IMR-90 (cell line): ENCODE measurements at regions of chr7 and their contacts with region 1.

Region 1: DNA sequence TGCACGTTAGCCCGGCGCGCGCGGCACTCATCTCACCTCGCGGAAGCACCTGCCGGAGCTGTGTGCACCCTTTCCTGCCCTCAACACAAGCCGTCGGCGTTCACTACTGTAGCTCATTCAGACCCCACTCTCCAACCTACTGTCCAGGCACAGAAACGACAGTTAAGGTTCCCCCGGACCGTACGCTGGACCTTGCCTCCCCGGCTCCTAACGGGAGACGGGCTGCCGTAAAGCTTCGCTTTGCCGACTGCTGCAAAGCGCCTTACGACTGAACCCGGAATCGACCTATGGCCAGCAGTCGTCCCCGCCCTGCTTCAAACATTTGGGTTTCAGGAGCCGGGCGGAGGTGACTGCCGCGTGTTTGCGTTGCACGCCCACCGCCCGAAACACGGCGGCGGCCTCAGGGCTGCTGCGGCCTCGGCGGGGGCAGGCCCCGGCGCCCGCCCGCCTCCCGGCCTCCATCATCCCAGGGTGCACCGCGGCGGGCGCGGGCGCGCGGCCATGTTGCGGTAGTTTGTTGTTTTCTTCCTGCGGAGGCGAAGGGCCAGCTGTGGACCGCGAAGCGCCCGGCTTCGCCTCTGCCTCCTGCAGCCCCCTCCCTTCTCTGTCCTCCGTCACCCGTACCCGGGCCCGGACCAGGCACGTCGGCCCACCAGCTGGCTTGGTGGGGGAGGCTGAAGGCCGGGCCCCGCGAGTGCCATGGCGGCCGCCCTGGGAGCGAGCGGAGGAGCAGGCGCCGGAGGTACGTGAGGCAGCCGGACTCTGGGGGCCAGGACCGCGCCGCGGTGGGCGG is at the start of gene RBM33:
- DNase-seq: peak; percentile 83
- ATAC-seq: peak; percentile 92
- H3K4me3 ChIP-seq: peak within 1 kb of the TSS; percentile 88
- H3K27ac ChIP-seq: peak within 1 kb of the TSS; percentile 90
- H3K4me1 ChIP-seq: peaks cover 3% of the 10 kb centered on the region
- H3K27me3 ChIP-seq: no peaks in the 10 kb centered on the region
- CTCF ChIP-seq: no peak
- POLR2A ChIP-seq: peak; percentile 83
- RAD21 ChIP-seq: no peak
- total RNA-seq, gene RBM33: 7.3 and 10.6 TPM in 2 replicates

Region 2: DNA sequence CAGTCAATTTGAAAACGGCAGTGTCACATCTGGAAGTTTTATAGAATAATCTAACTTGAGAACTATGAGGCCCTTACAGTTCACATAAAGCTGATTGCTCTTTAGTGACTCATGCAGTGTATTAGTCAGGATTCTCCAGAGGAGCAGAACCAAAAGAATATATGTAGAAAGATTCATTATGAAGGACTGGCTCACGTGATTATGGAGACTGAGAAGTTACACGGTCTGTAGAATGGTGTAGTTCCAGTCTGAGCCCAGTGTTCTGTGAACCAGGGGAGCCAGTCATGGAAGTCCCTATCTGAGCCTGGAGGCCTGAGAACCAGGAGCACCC is 21.5 kb after region 1 on chr7:
- CTCF ChIA-PET with region 1: no interaction called
- POLR2A ChIA-PET with region 1: no interaction called
- dilution Hi-C with region 1: no loop called
- in situ Hi-C with region 1: no loop called
- intact Hi-C with region 1: no loop called
- DNase-seq: peak; percentile 93
- ATAC-seq: peak; percentile 91
- H3K4me3 ChIP-seq: no peak overlapping the region
- H3K27ac ChIP-seq: peak overlapping the region; percentile 65; the same call in 1 of the 2 replicates
- H3K4me1 ChIP-seq: peaks cover 12% of the 10 kb centered on the region
- H3K27me3 ChIP-seq: no peaks in the 10 kb centered on the region
- CTCF ChIP-seq: no peak
- POLR2A ChIP-seq: no peak
- RAD21 ChIP-seq: no peak

Region 3: DNA sequence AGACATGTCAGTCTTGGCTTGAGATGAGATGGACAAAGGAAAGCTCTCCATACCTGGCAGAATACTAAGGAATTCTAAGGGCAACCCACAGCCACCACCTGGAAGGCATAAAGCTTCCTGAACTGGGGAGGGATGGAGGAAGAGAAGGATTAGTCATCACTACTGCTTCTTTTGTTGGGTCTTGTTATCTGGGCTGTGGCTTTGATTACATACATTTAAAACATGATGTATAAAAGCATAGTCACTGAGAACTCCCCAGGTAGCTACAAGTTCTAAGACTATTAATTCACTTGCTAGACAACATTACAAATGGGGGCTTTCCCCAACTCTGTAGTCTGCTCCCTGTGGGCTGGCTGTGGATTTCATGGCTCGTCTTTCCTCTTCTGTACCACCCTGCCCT is 58.2 kb after region 1 on chr7:
- CTCF ChIA-PET with region 1: no interaction called
- POLR2A ChIA-PET with region 1: no interaction called
- dilution Hi-C with region 1: no loop called
- in situ Hi-C with region 1: no loop called
- intact Hi-C with region 1: loop called (anchors 2 kb)
- DNase-seq: peak; percentile 39
- ATAC-seq: peak; percentile 40
- H3K4me3 ChIP-seq: no peak overlapping the region
- H3K27ac ChIP-seq: no peak overlapping the region
- H3K4me1 ChIP-seq: peaks cover 4% of the 10 kb centered on the region
- H3K27me3 ChIP-seq: no peaks in the 10 kb centered on the region
- CTCF ChIP-seq: no peak
- POLR2A ChIP-seq: no peak
- RAD21 ChIP-seq: no peak

Region 4: DNA sequence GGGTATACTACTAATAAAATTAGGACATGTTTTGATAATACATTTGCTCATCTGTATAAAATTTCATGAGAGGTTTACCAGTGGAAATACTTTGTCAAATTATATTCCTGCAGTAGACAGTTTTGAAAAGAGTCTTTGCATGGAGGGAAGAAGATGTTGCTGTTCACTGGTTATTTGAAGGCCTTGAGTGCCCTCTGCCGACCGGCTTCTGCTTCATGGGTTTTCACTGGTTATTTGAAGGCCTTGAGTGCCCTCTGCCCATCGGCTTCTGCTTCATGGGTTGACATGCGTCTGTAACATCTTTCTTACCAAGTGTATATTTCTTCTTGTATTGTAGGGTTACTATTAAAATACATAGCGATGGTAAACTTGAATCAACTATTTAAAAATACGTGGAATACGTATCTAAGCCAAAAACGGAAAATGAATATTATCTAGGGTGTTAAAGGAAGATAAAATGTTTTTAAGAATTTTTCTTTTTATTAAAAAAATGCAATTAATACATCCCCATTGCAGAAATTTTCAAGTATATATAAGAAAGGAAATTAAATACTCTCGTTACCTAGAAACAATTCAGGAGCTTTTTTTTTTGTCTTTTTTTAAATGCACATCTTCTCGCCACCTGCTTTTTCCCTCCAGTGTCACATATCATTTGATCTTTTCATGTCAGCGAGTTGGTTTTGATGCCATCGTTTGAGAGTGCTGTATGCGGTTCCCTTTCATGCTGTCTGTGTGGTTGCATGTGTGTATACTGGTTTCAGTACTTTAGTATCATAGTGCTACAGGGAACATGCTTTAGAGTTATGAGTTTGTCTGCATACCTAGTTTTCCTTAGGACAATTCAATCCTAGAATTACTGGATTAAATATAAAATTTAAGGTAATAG is 94.5 kb after region 1 on chr7:
- CTCF ChIA-PET with region 1: no interaction called
- POLR2A ChIA-PET with region 1: no interaction called
- dilution Hi-C with region 1: no loop called
- in situ Hi-C with region 1: no loop called
- intact Hi-C with region 1: loop called (anchors 2 kb)
- DNase-seq: peak; percentile 76
- ATAC-seq: peak; percentile 86
- H3K4me3 ChIP-seq: no peak overlapping the region
- H3K27ac ChIP-seq: no peak overlapping the region
- H3K4me1 ChIP-seq: no peaks in the 10 kb centered on the region
- H3K27me3 ChIP-seq: no peaks in the 10 kb centered on the region
- CTCF ChIP-seq: peak; percentile 72
- POLR2A ChIP-seq: no peak
- RAD21 ChIP-seq: peak; percentile 80

Region 5: DNA sequence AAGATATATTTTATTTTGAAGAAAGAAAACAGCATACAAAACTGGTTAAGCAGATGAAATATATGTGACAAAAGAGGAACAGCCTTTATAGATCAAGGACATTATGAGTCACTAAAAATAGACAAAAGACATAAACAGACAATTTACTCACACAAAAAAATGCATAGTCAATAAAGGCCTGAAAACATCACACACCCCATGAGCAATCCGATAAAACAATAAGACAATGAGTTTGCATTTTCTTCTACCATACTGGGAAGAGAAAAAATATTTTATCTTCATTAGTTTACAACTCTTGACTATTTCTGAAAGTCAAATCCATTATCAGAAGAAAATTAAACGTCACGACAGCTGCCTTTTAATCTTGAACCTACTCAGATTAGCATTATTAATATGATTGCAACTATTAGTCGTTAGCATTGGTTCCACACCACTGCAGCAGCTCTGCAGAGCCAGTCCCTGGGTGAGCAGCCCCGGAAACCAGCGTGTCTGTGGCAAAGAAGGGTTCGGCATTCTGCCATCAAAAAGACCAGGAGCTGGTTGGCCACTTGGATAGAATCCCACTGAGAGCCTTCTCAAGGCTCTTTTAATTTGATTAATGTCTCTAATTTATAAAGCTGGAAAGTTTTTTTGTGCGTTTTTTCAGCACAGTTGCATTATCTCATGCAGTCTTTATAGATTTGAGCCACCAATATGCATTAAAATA is 473.3 kb after region 1 on chr7:
- CTCF ChIA-PET with region 1: no interaction called
- POLR2A ChIA-PET with region 1: no interaction called
- dilution Hi-C with region 1: no loop called
- in situ Hi-C with region 1: no loop called
- intact Hi-C with region 1: no loop called
- DNase-seq: no peak
- ATAC-seq: no peak
- H3K4me3 ChIP-seq: no peak overlapping the region
- H3K27ac ChIP-seq: no peak overlapping the region
- H3K4me1 ChIP-seq: no peaks in the 10 kb centered on the region
- H3K27me3 ChIP-seq: no peaks in the 10 kb centered on the region
- CTCF ChIP-seq: no peak
- POLR2A ChIP-seq: no peak
- RAD21 ChIP-seq: no peak